ENCODE measurements at regions of chr9 and their contacts with region 1.

Region 1: GRCh38 chr9:125407974-125408900 is 146.6 kb downstream of the GAPVD1 start:
- DNase-seq: peak; percentile 42
- H3K4me3 ChIP-seq: peak overlapping the region; percentile 46 to 71 (median 62)
- H3K27ac ChIP-seq: no peak overlapping the region
- H3K4me1 ChIP-seq: peaks cover 9% of the 10 kb centered on the region
- H3K27me3 ChIP-seq: no peaks in the 10 kb centered on the region
- CTCF ChIP-seq: peak; percentile 60 to 88

Region 2: DNA sequence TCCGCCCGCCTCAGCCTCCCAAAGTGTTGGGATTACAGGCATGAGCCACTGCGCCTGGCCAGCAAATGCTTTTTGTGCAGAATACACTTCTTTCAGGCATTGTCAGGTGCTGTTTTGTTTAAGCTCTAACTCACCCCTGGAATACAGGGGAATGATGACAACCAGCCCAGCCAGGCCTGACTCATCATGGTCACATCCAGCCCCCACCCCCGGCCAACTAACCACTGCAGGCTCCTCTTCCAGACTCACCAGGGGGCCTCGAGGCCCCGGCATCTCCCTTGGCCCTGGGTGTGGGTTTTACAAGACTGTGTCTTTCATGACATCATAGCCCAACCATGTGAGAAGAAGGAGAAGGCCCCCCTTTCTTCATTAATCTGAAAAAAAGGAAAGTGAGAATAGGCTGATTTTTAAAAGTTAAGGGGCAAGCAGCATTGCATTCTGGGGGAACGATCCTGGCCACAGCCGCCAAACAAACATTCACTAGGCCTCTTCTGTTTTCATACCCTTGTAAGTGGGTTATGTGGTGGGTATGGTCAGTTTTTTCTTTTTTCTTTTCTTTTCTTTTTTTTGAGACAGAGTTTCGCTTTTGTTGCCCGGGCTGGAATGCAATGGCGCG is 595.7 kb before region 1 on chr9:
- CTCF ChIA-PET with region 1: no interaction called
- dilution Hi-C with region 1: no loop called
- in situ Hi-C with region 1: no loop called
- intact Hi-C with region 1: no loop called
- DNase-seq: peak; percentile 90
- H3K4me3 ChIP-seq: no peak overlapping the region
- H3K27ac ChIP-seq: peak overlapping the region; percentile 29
- H3K4me1 ChIP-seq: peaks cover 52% of the 10 kb centered on the region
- H3K27me3 ChIP-seq: no peaks in the 10 kb centered on the region
- CTCF ChIP-seq: no peak

Region 3: DNA sequence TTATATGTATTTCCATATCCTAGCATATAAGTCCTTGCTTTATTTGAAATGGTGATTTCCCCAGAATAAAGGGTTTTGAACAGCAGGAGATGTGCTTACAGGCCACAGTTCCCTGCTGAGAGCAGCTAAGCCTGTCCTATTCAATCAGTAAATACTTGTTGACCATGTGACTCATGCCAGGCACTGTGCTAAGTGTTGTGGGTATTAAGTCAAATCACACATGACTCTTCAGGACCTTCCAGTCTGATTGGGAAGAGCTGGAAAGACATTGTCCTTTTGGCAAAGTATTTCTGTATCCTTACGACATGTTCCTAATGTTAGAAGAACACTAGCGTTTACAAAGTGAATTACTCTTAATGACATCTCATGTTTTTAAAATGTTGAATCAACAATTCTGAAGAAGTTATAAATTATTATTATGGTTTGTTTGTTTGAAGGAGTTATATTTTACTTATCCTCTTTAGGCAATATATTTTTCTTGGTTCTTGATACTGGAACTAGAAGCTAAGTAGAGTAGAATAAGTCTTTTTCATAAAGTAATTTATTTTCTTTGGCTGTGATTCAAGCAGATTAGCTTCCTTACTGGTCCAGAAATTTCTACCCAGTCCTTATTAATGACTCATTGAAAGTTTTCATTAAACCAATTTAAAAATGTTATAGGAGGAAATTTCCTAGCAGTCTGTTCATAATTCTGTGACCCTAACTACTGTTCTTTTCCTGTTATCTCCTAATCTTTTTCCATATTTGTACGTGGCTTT is 64.5 kb before region 1 on chr9:
- CTCF ChIA-PET with region 1: no interaction called
- dilution Hi-C with region 1: no loop called
- in situ Hi-C with region 1: no loop called
- intact Hi-C with region 1: no loop called
- DNase-seq: peak; percentile 37
- H3K4me3 ChIP-seq: no peak overlapping the region
- H3K27ac ChIP-seq: no peak overlapping the region
- H3K4me1 ChIP-seq: peaks cover 5% of the 10 kb centered on the region
- H3K27me3 ChIP-seq: no peaks in the 10 kb centered on the region
- CTCF ChIP-seq: no peak

Region 4: DNA sequence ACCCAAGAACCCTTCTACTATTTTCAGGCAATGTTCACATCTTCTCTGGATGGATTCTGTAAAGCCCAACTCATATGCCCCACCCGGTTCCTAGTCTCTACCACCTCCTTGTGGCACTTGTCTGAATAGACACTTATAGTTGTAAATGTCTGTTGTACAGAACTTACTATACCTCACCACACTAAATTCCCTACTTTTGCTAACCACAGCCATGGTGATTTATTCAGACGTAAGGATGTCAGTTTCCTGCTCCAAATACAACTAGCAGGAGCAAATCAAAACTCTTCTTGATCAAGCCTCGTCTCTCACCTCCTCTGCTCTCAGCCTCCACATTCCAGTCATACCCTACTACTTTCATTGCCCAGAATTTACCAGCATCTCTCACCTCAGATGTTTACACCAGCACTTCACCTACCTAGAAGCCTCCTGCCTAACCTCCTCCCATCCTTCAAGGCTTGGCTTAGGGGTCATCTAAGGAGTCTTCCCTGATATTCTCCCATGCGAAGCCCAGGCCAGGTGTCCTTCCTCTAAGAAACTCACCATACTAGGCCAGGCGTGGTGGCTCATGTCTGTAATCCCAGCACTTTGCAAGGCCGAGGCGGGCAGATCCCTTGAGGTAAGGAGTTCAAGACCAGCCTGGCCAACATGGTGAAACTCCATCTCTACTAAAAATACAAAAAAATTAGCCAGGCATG is 223.3 kb after region 1 on chr9:
- CTCF ChIA-PET with region 1: no interaction called
- dilution Hi-C with region 1: no loop called
- in situ Hi-C with region 1: no loop called
- intact Hi-C with region 1: loop called (anchors 5 kb)
- DNase-seq: peak; percentile 42
- H3K4me3 ChIP-seq: no peak overlapping the region
- H3K27ac ChIP-seq: peak overlapping the region; percentile 14
- H3K4me1 ChIP-seq: peaks cover 47% of the 10 kb centered on the region
- H3K27me3 ChIP-seq: no peaks in the 10 kb centered on the region
- CTCF ChIP-seq: peak; percentile 44 to 53

Region 5: DNA sequence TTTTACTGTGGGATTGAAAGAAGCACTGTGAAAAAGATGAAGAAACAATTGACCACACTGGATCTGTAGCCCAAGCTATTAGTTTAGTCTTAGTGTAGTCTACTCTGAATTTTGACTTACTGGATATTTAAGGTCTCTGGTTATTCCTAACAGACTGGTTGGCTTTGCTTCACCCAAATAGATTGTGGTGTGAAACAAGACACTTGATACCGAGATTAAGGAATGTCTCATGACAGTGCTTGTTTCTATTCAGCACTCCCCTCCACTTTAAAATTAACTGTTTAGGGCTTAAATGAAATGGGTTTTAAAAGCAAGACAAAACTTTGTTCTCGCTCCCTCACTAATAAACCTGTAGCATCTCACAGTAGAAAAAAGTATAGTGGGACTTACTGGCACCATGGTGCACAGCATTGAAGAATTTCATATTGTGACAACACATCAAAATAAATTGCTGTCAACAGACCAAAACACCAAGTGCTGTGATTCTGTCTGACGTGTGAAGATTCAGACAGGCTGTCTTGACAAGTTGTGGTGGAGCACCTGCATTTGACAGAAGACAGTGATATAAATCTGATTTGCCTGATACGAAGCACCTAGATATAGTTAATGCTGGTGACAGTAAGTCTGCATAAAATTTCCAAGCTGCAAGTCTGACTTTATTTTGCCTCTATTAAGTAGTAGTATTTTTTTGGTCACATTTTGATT is 412.0 kb after region 1 on chr9:
- CTCF ChIA-PET with region 1: no interaction called
- dilution Hi-C with region 1: no loop called
- in situ Hi-C with region 1: no loop called
- intact Hi-C with region 1: loop called (anchors 5 kb)
- DNase-seq: no peak
- H3K4me3 ChIP-seq: no peak overlapping the region
- H3K27ac ChIP-seq: no peak overlapping the region
- H3K4me1 ChIP-seq: peaks cover 9% of the 10 kb centered on the region
- H3K27me3 ChIP-seq: no peaks in the 10 kb centered on the region
- CTCF ChIP-seq: no peak

Region 6: GRCh38 chr9:126228781-126229444 is 820.7 kb after region 1 on chr9:
- CTCF ChIA-PET with region 1: no interaction called
- dilution Hi-C with region 1: no loop called
- in situ Hi-C with region 1: loop called (anchors 5 to 25 kb)
- intact Hi-C with region 1: loop called (anchors 1 kb)
- DNase-seq: peak; percentile 45
- H3K4me3 ChIP-seq: no peak overlapping the region
- H3K27ac ChIP-seq: no peak overlapping the region
- H3K4me1 ChIP-seq: no peaks in the 10 kb centered on the region
- H3K27me3 ChIP-seq: no peaks in the 10 kb centered on the region
- CTCF ChIP-seq: peak; percentile 97 to 98

Region 7: DNA sequence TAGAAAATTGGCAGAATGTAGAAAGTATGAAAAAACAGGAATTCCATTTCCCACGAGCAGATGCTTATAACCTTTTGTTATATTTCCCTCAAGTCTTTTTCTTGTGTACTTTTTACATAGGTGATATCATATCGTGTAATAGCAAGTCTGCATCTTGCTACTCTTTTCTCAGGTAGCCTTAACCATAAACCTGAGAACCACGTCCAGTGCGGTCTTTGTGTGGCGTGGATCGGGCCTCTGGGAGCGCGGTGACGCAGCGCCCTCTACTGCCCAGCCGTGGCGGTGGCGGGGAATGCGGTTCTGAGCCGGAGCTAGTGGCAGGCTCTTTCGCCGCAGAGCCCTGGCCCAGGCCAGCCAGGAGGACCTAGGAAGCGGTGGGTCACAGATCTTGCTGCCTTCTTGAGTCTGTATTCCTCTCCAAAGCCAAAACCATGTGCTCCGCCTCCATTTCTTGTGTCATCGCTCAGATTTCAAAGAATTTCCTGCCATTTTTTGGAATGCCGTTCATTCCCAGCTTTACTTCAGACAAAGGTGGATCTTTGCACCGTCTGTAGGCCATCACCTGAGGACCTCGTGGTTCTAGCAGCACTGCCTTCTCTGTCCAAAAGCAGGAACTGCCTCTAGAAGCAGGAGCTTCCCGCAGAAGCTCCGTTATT is 990.3 kb after region 1 on chr9:
- CTCF ChIA-PET with region 1: no interaction called
- dilution Hi-C with region 1: no loop called
- in situ Hi-C with region 1: loop called (anchors 10 kb)
- intact Hi-C with region 1: loop called (anchors 2 kb)
- DNase-seq: peak; percentile 46
- H3K4me3 ChIP-seq: no peak overlapping the region
- H3K27ac ChIP-seq: no peak overlapping the region
- H3K4me1 ChIP-seq: peaks cover 13% of the 10 kb centered on the region
- H3K27me3 ChIP-seq: no peaks in the 10 kb centered on the region
- CTCF ChIP-seq: peak; percentile 93 to 100

Region 8: GRCh38 chr9:126411225-126411947 is 1003.1 kb after region 1 on chr9:
- CTCF ChIA-PET with region 1: no interaction called
- dilution Hi-C with region 1: no loop called
- in situ Hi-C with region 1: loop called in 1 of 2 experiments (anchors 10 kb)
- intact Hi-C with region 1: no loop called
- DNase-seq: peak; percentile 79
- H3K4me3 ChIP-seq: peak overlapping the region in 2 of 3 experiments; percentile 8 to 28
- H3K27ac ChIP-seq: peak overlapping the region; percentile 34
- H3K4me1 ChIP-seq: peaks cover 11% of the 10 kb centered on the region
- H3K27me3 ChIP-seq: no peaks in the 10 kb centered on the region
- CTCF ChIP-seq: no peak

Measured in mammary epithelial cell (primary cell).